Heart right ventricle (tissue), 16 donors: ENCODE measurements at regions of chr17 and their contacts with region 1.

Region 1: GRCh38 chr17:56977673-56978395 is at the start of gene SCPEP1:
- DNase-seq: peak; percentile 78 to 86
- ATAC-seq: peak; percentile 96 to 99 (median 97)
- H3K4me3 ChIP-seq: peak within 1 kb of the TSS; percentile 19 to 77 (median 64)
- H3K27ac ChIP-seq: peak within 1 kb of the TSS; percentile 26 to 69 (median 54)
- H3K4me1 ChIP-seq: peaks cover 4 to 30% (median 12%) of the 10 kb centered on the region in 9 donors
- H3K27me3 ChIP-seq: no peaks in the 10 kb centered on the region
- CTCF ChIP-seq: no peak
- total RNA-seq, gene SCPEP1: 39.2 to 144 (median 47.9) TPM

Region 2: GRCh38 chr17:56939901-56940343 is 37.9 kb before region 1 on chr17:
- intact Hi-C with region 1: no loop called
- DNase-seq: no peak
- ATAC-seq: peak; percentile 37 to 71 (median 56)
- H3K4me3 ChIP-seq: no peak overlapping the region
- H3K27ac ChIP-seq: no peak overlapping the region
- H3K4me1 ChIP-seq: peaks cover 0 to 18% (median 4%) of the 10 kb centered on the region in 9 donors
- H3K27me3 ChIP-seq: no peaks in the 10 kb centered on the region
- CTCF ChIP-seq: peak; percentile 46 to 84 (median 71)

Region 3: GRCh38 chr17:57084802-57085447 is 107.1 kb after region 1 on chr17 and contains the start of gene AKAP1:
- intact Hi-C with region 1: loop called in 1 of 10 experiments (anchors 5 kb)
- DNase-seq: peak; percentile 94 to 97
- ATAC-seq: peak; percentile 91 to 96 (median 95)
- H3K4me3 ChIP-seq: peak within 1 kb of the TSS; percentile 42 to 95 (median 78)
- H3K27ac ChIP-seq: peak within 1 kb of the TSS; percentile 88 to 99 (median 95)
- H3K4me1 ChIP-seq: peaks cover 6 to 57% (median 38%) of the 10 kb centered on the region in 9 donors
- H3K27me3 ChIP-seq: no peaks in the 10 kb centered on the region
- CTCF ChIP-seq: peak in 8 of 9 donors; percentile 7 to 49 (median 32)
- total RNA-seq, gene AKAP1: 107 to 234 (median 160) TPM